K562 (cell line): ENCODE measurements at regions of chr3 and their contacts with region 1.

Region 1: DNA sequence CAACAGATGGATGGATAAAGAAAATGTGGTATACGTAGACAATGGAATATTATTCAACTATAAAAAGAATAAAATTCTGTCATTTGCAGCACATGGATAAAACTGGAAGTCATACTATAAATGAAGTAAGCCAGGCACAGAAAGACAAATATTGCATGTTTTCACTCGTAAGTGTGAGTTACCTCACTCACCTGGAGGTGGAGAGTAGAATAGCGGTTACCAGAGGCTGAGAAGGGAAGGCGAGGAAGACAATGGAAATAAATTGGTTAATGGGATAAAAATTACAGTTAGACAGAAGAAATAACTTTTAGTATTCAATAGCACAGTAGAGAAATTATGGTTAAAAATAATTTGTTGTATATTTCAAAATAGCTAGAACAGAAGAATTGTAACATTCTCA is 141.6 kb downstream of the EFHB start:
- DNase-seq: no peak
- ATAC-seq: no peak
- H3K4me3 ChIP-seq: no peak overlapping the region
- H3K27ac ChIP-seq: no peak overlapping the region
- H3K4me1 ChIP-seq: no peaks in the 10 kb centered on the region
- H3K27me3 ChIP-seq: no peaks in the 10 kb centered on the region
- CTCF ChIP-seq: no peak
- EP300 ChIP-seq: no peak
- POLR2A ChIP-seq: no peak
- RAD21 ChIP-seq: no peak

Region 2: GRCh38 chr3:19816631-19817030 is 24.2 kb after region 1 on chr3:
- CTCF ChIA-PET with region 1: no interaction called
- POLR2A ChIA-PET with region 1: interaction called, 3 read pairs
- in situ Hi-C with region 1: no loop called
- intact Hi-C with region 1: loop called (anchors 1 kb)
- DNase-seq: no peak
- ATAC-seq: no peak
- H3K4me3 ChIP-seq: no peak overlapping the region
- H3K27ac ChIP-seq: no peak overlapping the region
- H3K4me1 ChIP-seq: no peaks in the 10 kb centered on the region; a peak in 2 of 5 replicates
- H3K27me3 ChIP-seq: no peaks in the 10 kb centered on the region
- CTCF ChIP-seq: no peak
- EP300 ChIP-seq: no peak
- POLR2A ChIP-seq: no peak
- RAD21 ChIP-seq: no peak

Region 3: DNA sequence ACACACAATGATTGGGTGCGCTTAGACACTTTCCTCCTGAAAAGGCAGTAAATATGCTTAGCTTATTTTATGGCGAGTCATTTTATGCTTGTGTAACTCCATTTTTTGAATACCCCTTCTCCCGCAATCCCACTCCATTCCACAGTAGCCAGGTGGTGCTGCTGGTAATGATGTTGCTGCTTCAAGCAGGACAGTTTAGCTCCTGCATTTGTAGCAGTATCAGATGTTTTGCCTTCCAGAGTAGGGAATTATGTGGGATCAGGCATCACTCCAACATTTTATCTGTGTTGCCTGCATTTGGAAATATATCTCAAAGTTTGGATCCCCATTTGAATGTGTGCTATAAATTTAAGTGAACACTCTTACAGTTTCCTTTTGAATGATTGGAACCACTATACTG is 695.8 kb after region 1 on chr3:
- CTCF ChIA-PET with region 1: no interaction called
- POLR2A ChIA-PET with region 1: no interaction called
- in situ Hi-C with region 1: no loop called
- intact Hi-C with region 1: no loop called
- DNase-seq: no peak
- ATAC-seq: no peak
- H3K4me3 ChIP-seq: no peak overlapping the region
- H3K27ac ChIP-seq: no peak overlapping the region
- H3K4me1 ChIP-seq: no peaks in the 10 kb centered on the region
- H3K27me3 ChIP-seq: no peaks in the 10 kb centered on the region
- CTCF ChIP-seq: no peak
- EP300 ChIP-seq: no peak
- POLR2A ChIP-seq: no peak
- RAD21 ChIP-seq: no peak